ENCODE measurements at regions of chr6 and their contacts with region 1.

Region 1: GRCh38 chr6:166956444-166957086 is at the start of gene RNASET2:
- DNase-seq: peak; percentile 96 to 100 (median 99)
- ATAC-seq: peak; percentile 81
- H3K4me3 ChIP-seq: peak within 1 kb of the TSS; percentile 96
- H3K4me3 Mint-ChIP-seq: peak within 1 kb of the TSS; percentile 95
- H3K27ac ChIP-seq: peak within 1 kb of the TSS; percentile 88 to 94
- H3K27ac Mint-ChIP-seq: peak within 1 kb of the TSS; percentile 93
- H3K4me1 ChIP-seq: peaks cover 81% of the 10 kb centered on the region
- H3K4me1 Mint-ChIP-seq: peaks cover 76% of the 10 kb centered on the region
- H3K27me3 ChIP-seq: no peaks in the 10 kb centered on the region
- H3K27me3 Mint-ChIP-seq: no peaks in the 10 kb centered on the region
- CTCF ChIP-seq: no peak
- total RNA-seq, gene RNASET2: 164 to 165 TPM

Region 2: GRCh38 chr6:166627033-166627874 is 329.3 kb before region 1 on chr6 and contains the start of gene RPS6KA2:
- CTCF ChIA-PET with region 1: no interaction called
- POLR2A ChIA-PET with region 1: interaction called, 9 read pairs
- intact Hi-C with region 1: loop called in 1 of 2 experiments (anchors 5 kb)
- DNase-seq: peak; percentile 100
- ATAC-seq: peak; percentile 92
- H3K4me3 ChIP-seq: peak within 1 kb of the TSS; percentile 78
- H3K4me3 Mint-ChIP-seq: peak within 1 kb of the TSS; percentile 91
- H3K27ac ChIP-seq: peak within 1 kb of the TSS in 1 of 2 donors; percentile 64
- H3K27ac Mint-ChIP-seq: peak within 1 kb of the TSS; percentile 92
- H3K4me1 ChIP-seq: peaks cover 24% of the 10 kb centered on the region
- H3K4me1 Mint-ChIP-seq: peaks cover 31% of the 10 kb centered on the region
- H3K27me3 ChIP-seq: peaks cover 4 to 20% of the 10 kb centered on the region in 2 experiments
- H3K27me3 Mint-ChIP-seq: peaks cover 29% of the 10 kb centered on the region
- CTCF ChIP-seq: no peak
- total RNA-seq, gene RPS6KA2: 5.6 to 6.2 TPM

Region 3: DNA sequence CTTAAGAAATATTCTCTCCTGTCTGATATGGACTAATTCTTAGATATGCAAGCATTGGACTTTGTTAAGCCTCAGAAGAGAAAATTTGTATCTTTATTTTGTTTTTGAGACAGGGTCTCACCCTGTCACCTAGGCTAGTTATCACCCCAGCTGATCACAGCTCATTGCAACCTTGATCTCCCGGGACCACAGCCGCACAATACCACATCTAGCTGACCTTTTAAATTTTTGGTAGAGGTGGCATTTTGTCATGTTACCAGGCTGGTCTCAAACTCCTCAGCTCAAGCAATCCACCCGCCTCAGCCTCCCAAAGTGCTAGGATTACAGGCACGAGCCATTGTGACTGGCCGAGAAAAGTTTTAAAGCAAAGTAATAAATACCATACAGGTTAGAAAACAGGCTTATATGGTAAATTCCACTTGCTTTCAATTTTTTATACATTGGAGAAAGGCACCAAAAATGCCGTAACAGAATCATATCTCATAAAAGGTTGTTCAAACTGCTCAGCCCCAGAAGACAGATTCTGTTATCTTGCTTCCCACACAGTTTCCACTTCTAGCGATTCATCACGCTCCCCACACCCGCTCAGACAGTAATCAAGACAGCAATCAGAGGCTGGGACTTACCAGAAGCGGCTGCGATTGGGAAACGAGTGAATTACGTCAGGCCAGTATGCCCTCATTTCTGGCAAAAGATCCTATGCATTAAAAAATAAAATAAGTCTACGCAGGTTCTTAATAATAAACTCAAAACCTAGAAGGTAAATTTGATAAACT is 14.0 kb before region 1 on chr6:
- CTCF ChIA-PET with region 1: interaction called, 9 read pairs
- POLR2A ChIA-PET with region 1: interaction called, 32 read pairs
- intact Hi-C with region 1: loop called in 1 of 2 experiments (anchors 2 kb)
- DNase-seq: peak in 12 of 14 experiments; percentile 38 to 84 (median 59)
- ATAC-seq: peak; percentile 93
- H3K4me3 ChIP-seq: no peak overlapping the region
- H3K4me3 Mint-ChIP-seq: peak overlapping the region; percentile 57
- H3K27ac ChIP-seq: peak overlapping the region; percentile 45 to 62
- H3K27ac Mint-ChIP-seq: peak overlapping the region; percentile 86
- H3K4me1 ChIP-seq: peaks cover 39% of the 10 kb centered on the region
- H3K4me1 Mint-ChIP-seq: peaks cover 46% of the 10 kb centered on the region
- H3K27me3 ChIP-seq: no peaks in the 10 kb centered on the region
- H3K27me3 Mint-ChIP-seq: no peaks in the 10 kb centered on the region
- CTCF ChIP-seq: no peak

Region 4: DNA sequence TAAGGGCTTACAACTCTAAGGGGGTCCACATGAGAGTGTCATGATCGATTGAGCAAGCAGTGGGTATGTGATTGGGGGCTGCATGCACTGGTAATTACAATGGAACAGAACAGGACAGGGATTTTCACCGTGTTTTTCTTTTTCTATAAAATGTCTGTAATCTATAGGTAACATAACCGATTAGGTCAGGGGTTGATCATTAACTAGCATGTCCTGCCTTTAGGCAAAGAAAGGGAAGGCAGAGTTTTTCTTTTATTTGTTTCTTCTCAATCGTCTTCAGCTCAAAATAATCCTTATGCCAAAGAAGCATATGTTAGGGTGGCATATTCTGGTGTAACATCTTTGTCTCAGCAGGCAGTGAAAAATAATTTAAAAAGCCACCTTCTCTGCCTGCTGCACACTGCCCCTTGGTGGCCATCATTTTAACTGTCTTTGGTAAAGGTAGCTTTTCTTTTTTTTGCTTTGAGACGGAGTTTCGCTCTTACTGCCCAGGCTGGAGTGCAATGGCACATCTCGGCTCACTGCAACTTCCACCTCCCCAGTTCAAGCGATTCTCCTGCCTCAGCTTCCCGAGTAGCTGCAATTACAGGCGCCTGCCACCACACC is 33.0 kb after region 1 on chr6:
- CTCF ChIA-PET with region 1: interaction called, 50 read pairs
- POLR2A ChIA-PET with region 1: interaction called, 20 read pairs
- intact Hi-C with region 1: loop called (anchors 1 to 5 kb)
- DNase-seq: peak in 12 of 14 experiments; percentile 23 to 79 (median 48)
- ATAC-seq: peak; percentile 89
- H3K4me3 ChIP-seq: no peak overlapping the region
- H3K4me3 Mint-ChIP-seq: no peak overlapping the region
- H3K27ac ChIP-seq: no peak overlapping the region
- H3K27ac Mint-ChIP-seq: peak overlapping the region; percentile 39
- H3K4me1 ChIP-seq: peaks cover 5% of the 10 kb centered on the region
- H3K4me1 Mint-ChIP-seq: peaks cover 21% of the 10 kb centered on the region
- H3K27me3 ChIP-seq: no peaks in the 10 kb centered on the region
- H3K27me3 Mint-ChIP-seq: no peaks in the 10 kb centered on the region
- CTCF ChIP-seq: peak; percentile 44

Region 5: GRCh38 chr6:167826230-167826895 is 869.8 kb after region 1 on chr6:
- CTCF ChIA-PET with region 1: no interaction called
- POLR2A ChIA-PET with region 1: no interaction called
- intact Hi-C with region 1: loop called in 1 of 2 experiments (anchors 10 kb)
- DNase-seq: peak; percentile 36 to 83 (median 58)
- ATAC-seq: peak; percentile 91
- H3K4me3 ChIP-seq: peak overlapping the region; percentile 80
- H3K4me3 Mint-ChIP-seq: peak overlapping the region; percentile 88
- H3K27ac ChIP-seq: no peak overlapping the region
- H3K27ac Mint-ChIP-seq: no peak overlapping the region
- H3K4me1 ChIP-seq: peaks cover 21% of the 10 kb centered on the region
- H3K4me1 Mint-ChIP-seq: peaks cover 13% of the 10 kb centered on the region
- H3K27me3 ChIP-seq: peaks cover 30 to 47% of the 10 kb centered on the region in 2 experiments
- H3K27me3 Mint-ChIP-seq: peaks cover 76% of the 10 kb centered on the region
- CTCF ChIP-seq: no peak

Measured in CD4-positive, alpha-beta T cell (primary cell).